Left ventricle myocardium inferior (tissue), 1 donor: ENCODE measurements at regions of chr9 and their contacts with region 1.

Region 1: GRCh38 chr9:135969064-135969683 is 8.0 kb upstream of the UBAC1 start:
- DNase-seq: no peak
- H3K4me3 ChIP-seq: no peak overlapping the region
- H3K27ac ChIP-seq: peak overlapping the region; percentile 51
- H3K4me1 ChIP-seq: peaks cover 37% of the 10 kb centered on the region
- H3K27me3 ChIP-seq: peaks cover 5% of the 10 kb centered on the region
- CTCF ChIP-seq: no peak

Region 2: GRCh38 chr9:136122425-136123383 is 153.5 kb after region 1 on chr9:
- intact Hi-C with region 1: loop called (anchors 5 kb)
- DNase-seq: peak; percentile 76
- H3K4me3 ChIP-seq: peak overlapping the region; percentile 55
- H3K27ac ChIP-seq: peak overlapping the region; percentile 30
- H3K4me1 ChIP-seq: peaks cover 32% of the 10 kb centered on the region
- H3K27me3 ChIP-seq: peaks cover 18% of the 10 kb centered on the region
- CTCF ChIP-seq: peak; percentile 98